ENCODE measurements at regions of chr5 and their contacts with region 1.

Region 1: GRCh38 chr5:35228310-35228709 is 2.0 kb downstream of the PRLR start:
- DNase-seq: no peak
- ATAC-seq: no peak
- H3K4me3 ChIP-seq: no peak overlapping the region
- H3K4me3 Mint-ChIP-seq: no peak overlapping the region
- H3K27ac ChIP-seq: no peak overlapping the region
- H3K27ac Mint-ChIP-seq: no peak overlapping the region
- H3K4me1 ChIP-seq: peaks cover 0 to 11% of the 10 kb centered on the region in 2 experiments
- H3K4me1 Mint-ChIP-seq: peaks cover 8 to 18% (median 16%) of the 10 kb centered on the region in 3 donors
- H3K27me3 ChIP-seq: peaks cover 18 to 36% of the 10 kb centered on the region in 2 experiments
- H3K27me3 Mint-ChIP-seq: peaks cover 82 to 85% of the 10 kb centered on the region in 2 donors

Region 2: DNA sequence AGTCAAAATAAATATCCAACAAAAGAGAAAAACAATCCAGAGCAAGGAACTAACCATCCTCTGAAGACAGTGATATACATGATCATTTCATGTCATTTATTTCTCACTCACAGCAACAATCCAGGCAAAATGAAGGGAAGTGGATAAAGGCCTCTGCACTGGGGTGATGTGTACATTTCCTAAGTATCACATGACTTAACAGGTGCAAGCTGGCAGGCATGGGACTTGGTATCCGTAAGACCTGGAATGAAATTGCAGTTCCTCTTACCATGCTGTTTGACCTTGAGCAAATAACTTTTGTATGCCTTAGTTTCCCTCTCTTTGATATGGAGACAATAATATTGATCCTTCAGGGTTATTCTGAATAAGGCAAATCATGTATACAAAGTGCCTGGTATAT is 75.6 kb before region 1 on chr5:
- CTCF ChIA-PET with region 1: interaction called in 1 of 2 experiments, 6 read pairs
- POLR2A ChIA-PET with region 1: interaction called in 1 of 2 experiments, 13 read pairs
- DNase-seq: no peak
- ATAC-seq: no peak
- H3K4me3 ChIP-seq: no peak overlapping the region
- H3K4me3 Mint-ChIP-seq: no peak overlapping the region
- H3K27ac ChIP-seq: no peak overlapping the region
- H3K27ac Mint-ChIP-seq: no peak overlapping the region
- H3K4me1 ChIP-seq: no peaks in the 10 kb centered on the region
- H3K4me1 Mint-ChIP-seq: no peaks in the 10 kb centered on the region
- H3K27me3 ChIP-seq: no peaks in the 10 kb centered on the region
- H3K27me3 Mint-ChIP-seq: no peaks in the 10 kb centered on the region

Region 3: GRCh38 chr5:35212122-35212982 is 16.0 kb before region 1 on chr5:
- CTCF ChIA-PET with region 1: no interaction called
- POLR2A ChIA-PET with region 1: no interaction called
- DNase-seq: no peak
- ATAC-seq: no peak
- H3K4me3 ChIP-seq: no peak overlapping the region
- H3K4me3 Mint-ChIP-seq: no peak overlapping the region
- H3K27ac ChIP-seq: no peak overlapping the region
- H3K27ac Mint-ChIP-seq: no peak overlapping the region
- H3K4me1 ChIP-seq: no peaks in the 10 kb centered on the region
- H3K4me1 Mint-ChIP-seq: no peaks in the 10 kb centered on the region
- H3K27me3 ChIP-seq: peaks cover 0 to 2% of the 10 kb centered on the region in 2 experiments
- H3K27me3 Mint-ChIP-seq: peaks cover 11 to 14% of the 10 kb centered on the region in 2 donors